Activated T-helper 1 cell treated with anti-CD3 and anti-CD28 coated beads, Interleukin-12 subunit alpha, Interleukin-12 subunit beta, Interleukin-2, Interleukin-4 antibody, amounts not matched to agents 30 ng/mL and 10 ng/mL and 1 ng/mL, durations not matched to agents 14 hours and 24 hours and 36 hours (primary cell): ENCODE measurements at regions of chr14 and their contacts with region 1.

Region 1: GRCh38 chr14:103871596-103872480 is 24.5 kb upstream of the PPP1R13B start:
- DNase-seq: peak; percentile 68
- H3K4me3 Mint-ChIP-seq: peak overlapping the region; percentile 83
- H3K27ac Mint-ChIP-seq: peak overlapping the region; percentile 80
- H3K4me1 Mint-ChIP-seq: peaks cover 5% of the 10 kb centered on the region
- H3K27me3 Mint-ChIP-seq: no peaks in the 10 kb centered on the region

Region 2: DNA sequence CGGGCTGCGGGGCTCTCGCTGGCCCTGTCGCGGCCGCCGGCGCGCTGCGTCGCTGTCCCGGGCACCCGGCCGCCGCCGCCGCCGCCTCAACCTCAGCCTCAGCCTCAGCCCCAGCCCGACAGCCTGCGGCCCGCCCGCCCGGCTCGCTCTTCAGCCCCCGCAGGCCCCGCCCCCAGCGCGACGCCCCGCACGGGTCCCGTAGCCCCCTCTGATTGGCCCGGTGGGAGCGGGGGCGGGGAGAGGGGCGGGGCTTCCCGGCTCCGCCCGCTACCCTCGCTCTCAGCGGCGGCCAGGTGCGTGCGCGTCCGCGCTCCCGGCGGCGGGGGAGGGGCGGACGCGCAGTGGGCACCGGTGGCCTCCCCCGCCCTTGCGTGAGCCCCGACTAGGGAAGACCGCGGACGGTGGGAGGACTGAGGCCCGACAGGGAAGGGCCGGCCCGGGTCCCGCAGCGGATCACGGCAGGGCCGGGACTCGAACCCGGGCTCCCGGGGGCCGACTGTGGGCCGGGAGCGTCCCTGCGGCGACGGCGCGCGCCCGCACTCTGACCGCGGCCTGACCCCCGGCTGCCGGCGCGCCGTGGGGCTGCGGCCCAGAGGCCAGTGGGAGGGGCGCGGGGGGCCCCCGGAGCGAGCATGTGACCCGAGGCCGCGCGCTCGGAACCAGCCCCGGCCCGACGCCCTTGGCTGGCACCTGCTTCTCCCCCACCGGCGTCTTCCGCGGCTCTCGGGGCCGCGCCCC is 24.2 kb before region 1 on chr14 and contains the start of gene PPP1R13B:
- intact Hi-C with region 1: loop called (anchors 1 kb)
- DNase-seq: peak; percentile 87
- H3K4me3 Mint-ChIP-seq: peak within 1 kb of the TSS; percentile 85
- H3K27ac Mint-ChIP-seq: peak within 1 kb of the TSS; percentile 51
- H3K4me1 Mint-ChIP-seq: peaks cover 15% of the 10 kb centered on the region
- H3K27me3 Mint-ChIP-seq: peaks cover 20% of the 10 kb centered on the region
- total RNA-seq, gene PPP1R13B: 9.6 and 9.8 TPM in 2 replicates

Region 3: GRCh38 chr14:103904493-103905107 is 32.8 kb after region 1 on chr14:
- intact Hi-C with region 1: loop called (anchors 5 kb)
- DNase-seq: no peak
- H3K4me3 Mint-ChIP-seq: no peak overlapping the region
- H3K27ac Mint-ChIP-seq: no peak overlapping the region
- H3K4me1 Mint-ChIP-seq: peaks cover 11% of the 10 kb centered on the region
- H3K27me3 Mint-ChIP-seq: no peaks in the 10 kb centered on the region